Activated B cell treated with CpG ODN at 0.5 μM for 24 hours (primary cell): ENCODE measurements at regions of chr1 and their contacts with region 1.

Region 1: DNA sequence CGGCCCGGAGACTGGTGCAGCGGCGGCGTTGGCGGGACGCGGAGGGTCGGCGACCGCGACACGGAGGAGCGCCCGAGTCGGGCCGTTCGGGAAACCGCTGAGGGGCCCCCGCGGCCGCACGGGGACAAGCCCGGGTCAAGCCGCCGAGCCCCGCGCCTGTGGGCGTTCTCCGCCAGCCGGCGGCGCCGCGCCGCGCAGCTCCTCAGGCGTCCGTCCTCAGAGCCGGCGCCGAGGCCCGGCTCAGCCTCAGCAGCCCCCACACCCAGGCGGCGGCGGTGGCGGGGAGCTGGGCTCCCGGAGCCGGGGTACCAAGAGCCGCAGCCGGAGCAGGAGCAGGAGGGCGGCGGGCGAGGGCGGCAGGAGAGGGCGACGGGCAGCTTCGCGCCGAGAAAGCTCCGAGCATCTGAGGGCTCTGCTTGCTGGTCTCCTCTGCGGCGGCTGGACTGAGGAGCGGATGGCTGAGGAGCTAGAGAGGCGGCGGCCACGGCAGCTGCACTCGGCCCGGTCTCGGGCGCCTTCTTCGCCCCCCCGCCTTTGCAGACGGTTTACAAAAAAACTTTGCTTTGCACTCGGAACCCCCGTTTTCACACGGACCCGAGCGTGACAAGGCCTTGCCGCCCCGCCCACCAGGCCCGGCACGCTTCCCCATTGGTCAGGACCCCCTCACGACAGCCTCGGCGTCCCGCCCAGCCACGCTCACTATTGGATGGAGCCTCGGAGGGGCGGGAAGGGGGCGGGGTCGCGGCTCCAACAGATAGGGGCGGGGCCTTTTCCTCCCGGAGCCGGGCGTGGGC is at the start of gene SLC30A1:
- DNase-seq: peak; percentile 99
- ATAC-seq: peak; percentile 90
- H3K4me3 Mint-ChIP-seq: peak within 1 kb of the TSS; percentile 94
- H3K27ac Mint-ChIP-seq: peak within 1 kb of the TSS; percentile 89
- H3K4me1 Mint-ChIP-seq: peaks cover 28% of the 10 kb centered on the region
- H3K27me3 Mint-ChIP-seq: no peaks in the 10 kb centered on the region
- CTCF ChIP-seq: no peak
- total RNA-seq, gene SLC30A1: 14.2 and 15.6 TPM in 2 replicates

Region 2: GRCh38 chr1:211382714-211383480 is 195.9 kb before region 1 on chr1:
- CTCF ChIA-PET with region 1: no interaction called
- POLR2A ChIA-PET with region 1: interaction called, 3 read pairs
- intact Hi-C with region 1: loop called (anchors 2 kb)
- DNase-seq: peak; percentile 86
- ATAC-seq: peak; percentile 96
- H3K4me3 Mint-ChIP-seq: peak overlapping the region; percentile 93
- H3K27ac Mint-ChIP-seq: peak overlapping the region; percentile 98
- H3K4me1 Mint-ChIP-seq: peaks cover 20% of the 10 kb centered on the region
- H3K27me3 Mint-ChIP-seq: no peaks in the 10 kb centered on the region
- CTCF ChIP-seq: no peak

Region 3: GRCh38 chr1:211625040-211625439 is 46.2 kb after region 1 on chr1:
- CTCF ChIA-PET with region 1: interaction called, 5 read pairs
- POLR2A ChIA-PET with region 1: interaction called, 4 read pairs
- intact Hi-C with region 1: loop called (anchors 1 kb)
- DNase-seq: no peak
- ATAC-seq: peak; percentile 68
- H3K4me3 Mint-ChIP-seq: no peak overlapping the region
- H3K27ac Mint-ChIP-seq: no peak overlapping the region
- H3K4me1 Mint-ChIP-seq: no peaks in the 10 kb centered on the region
- H3K27me3 Mint-ChIP-seq: peaks cover 6% of the 10 kb centered on the region
- CTCF ChIP-seq: no peak

Region 4: DNA sequence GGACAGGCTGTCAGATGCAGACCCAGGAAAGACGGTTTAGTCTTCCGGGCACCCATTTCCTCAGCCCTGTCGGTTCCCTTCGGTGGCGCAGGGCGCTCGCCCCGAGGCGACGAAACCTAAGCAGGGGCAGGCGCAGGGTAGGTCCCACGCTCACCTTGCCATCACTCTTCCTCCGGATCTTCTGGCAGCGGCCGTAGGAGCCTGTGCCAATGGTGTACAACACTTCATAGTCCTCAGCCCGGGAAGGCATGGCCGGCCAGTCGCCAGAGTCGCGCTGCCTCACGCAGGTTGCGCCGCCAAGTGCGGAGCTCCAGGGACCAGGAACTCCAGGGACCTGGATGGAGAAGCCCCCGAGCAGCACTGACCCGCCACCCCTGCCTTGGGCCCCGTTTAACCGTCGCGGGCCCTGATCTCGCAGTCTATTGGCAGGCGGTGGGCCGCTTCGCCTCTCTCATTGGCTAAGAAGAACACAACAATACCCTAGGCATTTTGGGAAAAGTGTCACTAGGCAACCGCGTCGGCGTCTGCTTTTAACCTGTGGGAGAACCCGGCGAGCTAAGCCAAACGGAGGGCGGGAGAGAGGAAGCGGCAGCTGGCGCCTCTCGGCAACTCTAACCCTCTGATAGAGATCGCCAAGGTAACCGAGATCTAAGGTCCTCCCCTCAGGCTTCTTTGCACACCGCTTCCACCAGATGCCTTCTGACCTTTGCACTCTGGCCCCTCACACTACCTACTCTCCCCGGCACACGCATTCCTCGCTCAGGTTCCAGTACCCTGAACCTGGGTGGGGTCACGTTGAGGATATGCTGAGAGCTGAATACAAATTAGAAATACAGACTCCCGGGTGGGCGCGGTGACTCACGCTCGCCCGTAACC is 96.6 kb after region 1 on chr1 and contains the start of gene NEK2:
- CTCF ChIA-PET with region 1: no interaction called
- POLR2A ChIA-PET with region 1: no interaction called
- intact Hi-C with region 1: loop called (anchors 1 kb)
- DNase-seq: peak; percentile 64
- ATAC-seq: peak; percentile 93
- H3K4me3 Mint-ChIP-seq: peak within 1 kb of the TSS; percentile 88
- H3K27ac Mint-ChIP-seq: peak within 1 kb of the TSS; percentile 69
- H3K4me1 Mint-ChIP-seq: peaks cover 39% of the 10 kb centered on the region
- H3K27me3 Mint-ChIP-seq: no peaks in the 10 kb centered on the region
- CTCF ChIP-seq: no peak
- total RNA-seq, gene NEK2: 0.35 and 0.59 TPM in 2 replicates

Region 5: GRCh38 chr1:212035123-212035834 is 456.4 kb after region 1 on chr1 and contains the starts of genes DTL and INTS7:
- CTCF ChIA-PET with region 1: no interaction called
- POLR2A ChIA-PET with region 1: interaction called, 6 read pairs
- intact Hi-C with region 1: loop called (anchors 1 kb)
- DNase-seq: peak; percentile 93
- ATAC-seq: peak; percentile 86
- H3K4me3 Mint-ChIP-seq: peak within 1 kb of the TSS; percentile 99
- H3K27ac Mint-ChIP-seq: peak within 1 kb of the TSS; percentile 99
- H3K4me1 Mint-ChIP-seq: peaks cover 58% of the 10 kb centered on the region
- H3K27me3 Mint-ChIP-seq: no peaks in the 10 kb centered on the region
- CTCF ChIP-seq: peak; percentile 38
- total RNA-seq, gene DTL: 4.2 and 5.0 TPM in 2 replicates
- total RNA-seq, gene INTS7: 19.1 and 19.9 TPM in 2 replicates

Region 6: DNA sequence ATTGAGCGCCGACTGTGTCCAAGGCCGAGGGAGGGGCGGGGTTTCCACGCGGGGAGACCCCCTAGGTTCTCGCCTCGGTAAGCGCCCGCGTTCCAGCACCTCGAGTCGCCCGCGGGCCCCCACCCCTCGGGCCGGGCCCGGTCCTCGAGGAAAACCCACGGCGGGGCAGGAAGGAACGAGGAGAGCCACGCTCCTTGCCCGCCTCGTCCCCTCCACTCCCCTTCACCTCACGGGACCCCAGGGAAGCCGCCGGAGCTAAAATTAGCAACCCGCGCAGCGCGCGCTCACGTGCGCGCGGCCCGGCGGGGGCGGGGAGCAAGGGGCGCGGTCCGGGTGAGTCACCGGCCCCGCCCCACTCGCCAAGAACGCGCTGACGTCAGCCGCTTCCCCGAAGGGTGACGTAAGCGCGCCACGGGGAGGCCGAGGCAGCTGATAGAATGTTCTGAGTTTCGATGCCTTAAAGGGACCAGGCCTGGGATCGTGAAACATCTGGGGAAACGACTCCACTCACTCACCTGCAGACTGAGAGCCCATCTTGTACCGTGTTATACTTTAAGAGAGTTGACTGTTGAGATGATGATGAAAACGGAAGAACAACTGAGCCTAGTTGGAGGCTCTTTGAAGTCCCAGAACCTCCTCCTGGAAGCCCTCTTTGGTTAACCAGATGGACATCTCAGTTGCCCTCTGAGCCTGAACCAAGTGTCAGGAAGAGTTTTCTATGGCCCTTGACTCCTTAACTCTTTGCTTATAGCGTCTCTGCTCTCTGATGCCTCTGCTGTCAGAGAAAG is 980.0 kb after region 1 on chr1:
- CTCF ChIA-PET with region 1: no interaction called
- POLR2A ChIA-PET with region 1: no interaction called
- intact Hi-C with region 1: loop called (anchors 2 kb)
- DNase-seq: peak; percentile 93
- ATAC-seq: peak; percentile 88
- H3K4me3 Mint-ChIP-seq: peak overlapping the region; percentile 88
- H3K27ac Mint-ChIP-seq: peak overlapping the region; percentile 93
- H3K4me1 Mint-ChIP-seq: peaks cover 13% of the 10 kb centered on the region
- H3K27me3 Mint-ChIP-seq: peaks cover 2% of the 10 kb centered on the region
- CTCF ChIP-seq: no peak

Region 7: GRCh38 chr1:213015099-213016050 is 1436.5 kb after region 1 on chr1 and contains the start of gene ANGEL2:
- CTCF ChIA-PET with region 1: no interaction called
- POLR2A ChIA-PET with region 1: no interaction called
- intact Hi-C with region 1: loop called (anchors 1 kb)
- DNase-seq: peak; percentile 87
- ATAC-seq: peak; percentile 95
- H3K4me3 Mint-ChIP-seq: peak within 1 kb of the TSS; percentile 100
- H3K27ac Mint-ChIP-seq: peak within 1 kb of the TSS; percentile 99
- H3K4me1 Mint-ChIP-seq: peaks cover 20% of the 10 kb centered on the region
- H3K27me3 Mint-ChIP-seq: no peaks in the 10 kb centered on the region
- CTCF ChIP-seq: no peak
- total RNA-seq, gene ANGEL2: 54.1 and 63.3 TPM in 2 replicates